ENCODE measurements at regions of chr11 and their contacts with region 1.

Region 1: GRCh38 chr11:126194121-126194543 is 17.3 kb downstream of the RPUSD4 start:
- DNase-seq: peak; percentile 53
- ATAC-seq: peak; percentile 60
- H3K4me3 Mint-ChIP-seq: no peak overlapping the region
- H3K27ac Mint-ChIP-seq: no peak overlapping the region
- H3K4me1 Mint-ChIP-seq: no peaks in the 10 kb centered on the region
- H3K27me3 Mint-ChIP-seq: no peaks in the 10 kb centered on the region
- CTCF ChIP-seq: peak; percentile 77

Region 2: GRCh38 chr11:125923012-125923579 is 271.0 kb before region 1 on chr11:
- CTCF ChIA-PET with region 1: interaction called, 36 read pairs
- POLR2A ChIA-PET with region 1: no interaction called
- intact Hi-C with region 1: loop called (anchors 1 kb)
- DNase-seq: peak; percentile 78
- ATAC-seq: peak; percentile 80
- H3K4me3 Mint-ChIP-seq: no peak overlapping the region
- H3K27ac Mint-ChIP-seq: no peak overlapping the region
- H3K4me1 Mint-ChIP-seq: peaks cover 3% of the 10 kb centered on the region
- H3K27me3 Mint-ChIP-seq: peaks cover 11% of the 10 kb centered on the region
- CTCF ChIP-seq: peak; percentile 75

Region 3: GRCh38 chr11:125941619-125942611 is 252.2 kb before region 1 on chr11:
- CTCF ChIA-PET with region 1: interaction called, 30 read pairs
- POLR2A ChIA-PET with region 1: no interaction called
- intact Hi-C with region 1: no loop called
- DNase-seq: peak; percentile 73
- ATAC-seq: peak; percentile 89
- H3K4me3 Mint-ChIP-seq: no peak overlapping the region
- H3K27ac Mint-ChIP-seq: no peak overlapping the region
- H3K4me1 Mint-ChIP-seq: peaks cover 7% of the 10 kb centered on the region
- H3K27me3 Mint-ChIP-seq: no peaks in the 10 kb centered on the region
- CTCF ChIP-seq: peak; percentile 72

Region 4: GRCh38 chr11:126224647-126225294 is 30.6 kb after region 1 on chr11:
- CTCF ChIA-PET with region 1: no interaction called
- POLR2A ChIA-PET with region 1: no interaction called
- intact Hi-C with region 1: no loop called
- DNase-seq: no peak
- ATAC-seq: no peak
- H3K4me3 Mint-ChIP-seq: no peak overlapping the region
- H3K27ac Mint-ChIP-seq: no peak overlapping the region
- H3K4me1 Mint-ChIP-seq: no peaks in the 10 kb centered on the region
- H3K27me3 Mint-ChIP-seq: no peaks in the 10 kb centered on the region
- CTCF ChIP-seq: no peak